Mucosa of descending colon (tissue), 3 donors: ENCODE measurements at regions of chr19 and their contacts with region 1.

Region 1: GRCh38 chr19:33302175-33302973 is at the start of gene CEBPA:
- DNase-seq: peak; percentile 83 to 92 (median 88)
- ATAC-seq: peak; percentile 80
- H3K4me3 ChIP-seq: peak within 1 kb of the TSS; percentile 38
- H3K4me1 ChIP-seq: peaks cover 25% of the 10 kb centered on the region
- CTCF ChIP-seq: peak; percentile 68
- total RNA-seq, gene CEBPA: 30.1 to 73.2 (median 66.1) TPM

Region 2: DNA sequence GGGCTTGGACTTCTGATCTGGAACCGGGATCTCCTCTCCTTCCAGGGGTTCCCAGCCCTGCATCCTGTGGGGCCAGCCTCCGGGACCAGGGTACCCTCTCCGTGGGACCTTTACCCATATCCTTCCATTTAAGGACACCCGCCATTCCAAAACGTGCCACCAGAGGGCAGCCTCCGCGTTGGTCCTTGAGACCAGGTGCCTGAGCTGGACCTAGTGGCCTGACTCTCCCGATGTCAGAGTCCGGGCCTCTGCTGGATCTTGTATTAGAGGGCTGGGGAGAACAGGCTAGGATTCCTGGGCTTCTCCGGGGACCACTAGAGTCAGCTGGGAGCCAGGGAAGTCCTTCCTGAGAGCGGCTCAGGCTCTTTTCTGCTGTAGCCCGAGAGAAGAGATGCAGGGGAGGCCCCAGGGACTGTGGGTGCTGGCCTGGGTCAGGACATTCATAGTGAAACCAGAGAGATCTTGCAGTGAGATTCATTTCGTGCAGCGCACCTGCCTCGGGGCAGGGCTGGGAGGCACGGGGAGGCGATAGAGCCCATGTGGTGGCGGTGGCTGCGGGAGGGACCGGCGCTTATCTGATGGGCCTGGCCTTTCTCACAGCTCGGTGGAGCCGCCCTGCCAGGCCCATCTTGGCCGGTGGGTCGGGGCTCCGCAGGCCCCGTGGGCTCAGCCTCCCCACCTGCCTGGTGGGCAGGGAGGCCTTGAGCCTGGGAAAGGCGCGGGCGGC is 66.9 kb before region 1 on chr19:
- intact Hi-C with region 1: loop called in 1 of 2 experiments (anchors 5 kb)
- DNase-seq: peak; percentile 75 to 95 (median 86)
- ATAC-seq: peak; percentile 91
- H3K4me3 ChIP-seq: no peak overlapping the region
- H3K4me1 ChIP-seq: peaks cover 2% of the 10 kb centered on the region
- CTCF ChIP-seq: peak; percentile 82

Region 3: DNA sequence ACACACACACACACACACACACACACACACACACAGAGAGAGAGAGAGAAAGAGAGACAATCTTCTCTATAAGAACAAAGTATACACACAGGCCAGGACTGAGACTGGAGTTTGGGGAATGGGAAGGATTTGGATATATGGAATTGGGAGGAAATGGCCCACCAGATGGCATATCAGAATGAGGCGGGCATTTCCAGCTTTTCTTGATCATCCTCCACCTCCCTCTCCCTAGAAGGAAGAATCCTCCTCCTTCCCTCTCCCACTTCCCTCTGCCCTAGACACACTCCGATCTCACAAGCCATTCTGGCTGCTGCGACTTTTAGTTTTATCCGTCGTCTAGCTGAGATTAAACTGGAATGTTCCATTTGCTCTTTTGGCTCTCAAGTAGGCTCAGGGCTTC is 61.1 kb after region 1 on chr19:
- intact Hi-C with region 1: no loop called
- DNase-seq: no peak
- ATAC-seq: no peak
- H3K4me3 ChIP-seq: no peak overlapping the region
- H3K4me1 ChIP-seq: peaks cover 25% of the 10 kb centered on the region
- CTCF ChIP-seq: no peak

Region 4: GRCh38 chr19:33373701-33374421 is 71.5 kb after region 1 on chr19 and contains the start of gene CEBPG:
- intact Hi-C with region 1: loop called (anchors 10 kb)
- DNase-seq: peak; percentile 65 to 79 (median 67)
- ATAC-seq: peak; percentile 18
- H3K4me3 ChIP-seq: peak within 1 kb of the TSS; percentile 87
- H3K4me1 ChIP-seq: peaks cover 20% of the 10 kb centered on the region
- CTCF ChIP-seq: peak; percentile 1
- total RNA-seq, gene CEBPG: 47.8 to 68.5 (median 58.2) TPM